HepG2 (cell line): ENCODE measurements at regions of chr19 and their contacts with region 1.

Region 1: DNA sequence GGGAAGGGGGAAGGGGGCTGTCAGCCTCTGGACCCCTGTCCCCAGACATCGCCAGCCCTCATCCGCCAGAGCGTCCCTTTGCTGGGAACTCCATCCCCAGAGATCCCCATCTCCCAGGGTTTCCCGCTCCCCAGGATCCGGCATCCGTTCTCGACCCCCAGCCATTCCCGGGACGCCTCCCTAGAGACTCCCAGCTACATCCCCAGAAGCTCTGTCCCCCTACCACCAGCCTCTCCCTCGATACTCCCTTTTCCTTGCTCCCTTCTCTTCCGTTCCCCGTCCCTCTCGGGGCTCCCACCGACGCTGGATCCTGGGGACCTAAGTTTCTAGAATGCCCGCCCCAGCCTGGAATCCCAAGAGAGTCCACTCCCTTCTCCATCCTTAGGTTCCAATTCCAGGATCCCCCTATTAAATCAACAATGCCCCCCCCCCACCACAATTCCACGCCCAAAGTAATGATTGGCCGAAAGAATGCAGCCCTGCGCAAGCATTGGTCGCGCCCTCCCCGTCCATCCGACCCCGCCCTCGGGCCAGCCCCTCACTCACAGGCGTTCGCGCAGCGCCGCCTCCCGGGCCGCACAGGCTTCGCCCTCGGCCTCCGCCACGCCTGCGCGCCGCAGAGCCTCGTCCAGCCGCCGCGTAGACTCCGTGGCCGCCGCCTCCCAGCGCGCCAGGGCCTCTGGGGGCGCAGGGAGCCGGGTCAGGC is 3.2 kb downstream of the CCDC194 start:
- DNase-seq: peak; percentile 83
- ATAC-seq: peak; percentile 98
- H3K4me3 ChIP-seq: peak overlapping the region; percentile 31 to 69 (median 49); a peak in 5 of 6 replicates
- H3K27ac ChIP-seq: no peak overlapping the region
- H3K4me1 ChIP-seq: peaks cover 8% of the 10 kb centered on the region
- H3K27me3 ChIP-seq: peaks cover 0 to 1% of the 10 kb centered on the region in 2 experiments; a peak in 1 of 5 replicates
- CTCF ChIP-seq: peak; percentile 89
- EP300 ChIP-seq: no peak
- POLR2A ChIP-seq: no peak
- RAD21 ChIP-seq: peak; percentile 87

Region 2: GRCh38 chr19:17069218-17069617 is 321.6 kb before region 1 on chr19:
- CTCF ChIA-PET with region 1: no interaction called
- POLR2A ChIA-PET with region 1: no interaction called
- in situ Hi-C with region 1: no loop called
- intact Hi-C with region 1: loop called (anchors 5 kb)
- DNase-seq: no peak
- ATAC-seq: no peak
- H3K4me3 ChIP-seq: no peak overlapping the region
- H3K27ac ChIP-seq: no peak overlapping the region
- H3K4me1 ChIP-seq: peaks cover 26% of the 10 kb centered on the region
- H3K27me3 ChIP-seq: no peaks in the 10 kb centered on the region
- CTCF ChIP-seq: no peak
- EP300 ChIP-seq: no peak
- POLR2A ChIP-seq: no peak
- RAD21 ChIP-seq: no peak

Region 3: GRCh38 chr19:17346109-17346671 is 44.6 kb before region 1 on chr19:
- CTCF ChIA-PET with region 1: interaction called, 49 read pairs
- POLR2A ChIA-PET with region 1: no interaction called
- in situ Hi-C with region 1: loop called (anchors 5 kb)
- intact Hi-C with region 1: loop called (anchors 1 kb)
- DNase-seq: peak; percentile 39
- ATAC-seq: peak; percentile 90
- H3K4me3 ChIP-seq: no peak overlapping the region
- H3K27ac ChIP-seq: no peak overlapping the region
- H3K4me1 ChIP-seq: peaks cover 32% of the 10 kb centered on the region
- H3K27me3 ChIP-seq: peaks cover 1 to 13% of the 10 kb centered on the region in 2 experiments; a peak in 3 of 5 replicates
- CTCF ChIP-seq: peak; percentile 96
- EP300 ChIP-seq: no peak
- POLR2A ChIP-seq: no peak
- RAD21 ChIP-seq: peak; percentile 81

Region 4: GRCh38 chr19:17419621-17420466 is 29.0 kb after region 1 on chr19 and contains the start of gene MVB12A:
- CTCF ChIA-PET with region 1: no interaction called
- POLR2A ChIA-PET with region 1: no interaction called
- in situ Hi-C with region 1: no loop called
- intact Hi-C with region 1: no loop called
- DNase-seq: peak; percentile 98
- ATAC-seq: peak; percentile 91
- H3K4me3 ChIP-seq: peak within 1 kb of the TSS; percentile 65 to 96 (median 82)
- H3K27ac ChIP-seq: peak within 1 kb of the TSS; percentile 65
- H3K4me1 ChIP-seq: peaks cover 17% of the 10 kb centered on the region
- H3K27me3 ChIP-seq: no peaks in the 10 kb centered on the region
- CTCF ChIP-seq: peak; percentile 6; the same call in 1 of the 2 replicates
- EP300 ChIP-seq: peak; percentile 30 to 38; a peak in 2 of 4 replicates
- POLR2A ChIP-seq: peak; percentile 48 to 60
- RAD21 ChIP-seq: no peak
- total RNA-seq, gene MVB12A: 31.8 and 36.1 TPM in 2 replicates

Region 5: DNA sequence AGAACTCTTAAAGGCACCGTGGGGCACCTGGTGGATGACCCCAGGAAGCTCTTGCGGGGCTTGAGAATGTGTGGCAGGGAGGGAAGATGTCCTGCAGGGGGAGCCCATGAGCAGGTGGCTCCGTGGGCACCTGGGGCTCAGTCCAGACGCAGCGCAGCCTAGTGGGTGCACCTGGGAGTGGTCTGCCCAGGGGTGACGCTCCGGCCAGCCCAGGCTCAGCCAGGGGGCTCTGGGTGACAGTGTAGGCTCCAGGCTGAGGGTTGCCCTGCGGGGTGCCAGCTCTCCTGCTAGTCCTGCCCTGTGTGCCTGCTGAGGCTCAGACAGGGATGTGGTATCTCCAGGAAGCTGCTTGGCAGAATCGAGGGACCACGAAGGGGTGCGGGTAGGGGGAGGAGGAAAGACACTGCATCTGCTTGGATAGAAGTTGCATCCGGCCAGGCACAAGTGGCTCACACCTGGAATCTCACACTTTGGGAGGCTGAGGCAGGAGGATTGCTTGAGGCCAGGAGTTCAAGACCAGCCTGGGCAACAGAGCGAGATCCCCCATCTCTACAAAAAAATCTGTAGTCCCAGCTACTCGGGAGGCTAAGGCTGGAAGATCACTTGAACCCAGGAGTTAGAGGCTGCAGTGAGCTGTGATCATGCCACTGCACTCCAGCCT is 105.6 kb after region 1 on chr19:
- CTCF ChIA-PET with region 1: no interaction called
- POLR2A ChIA-PET with region 1: no interaction called
- in situ Hi-C with region 1: no loop called
- intact Hi-C with region 1: no loop called
- DNase-seq: peak; percentile 81
- ATAC-seq: peak; percentile 85
- H3K4me3 ChIP-seq: no peak overlapping the region
- H3K27ac ChIP-seq: no peak overlapping the region
- H3K4me1 ChIP-seq: peaks cover 40% of the 10 kb centered on the region
- H3K27me3 ChIP-seq: no peaks in the 10 kb centered on the region
- CTCF ChIP-seq: peak; percentile 93
- EP300 ChIP-seq: no peak
- POLR2A ChIP-seq: no peak
- RAD21 ChIP-seq: peak; percentile 89